Ascending aorta (tissue), 2 donors: ENCODE measurements at regions of chr18 and their contacts with region 1.

Region 1: DNA sequence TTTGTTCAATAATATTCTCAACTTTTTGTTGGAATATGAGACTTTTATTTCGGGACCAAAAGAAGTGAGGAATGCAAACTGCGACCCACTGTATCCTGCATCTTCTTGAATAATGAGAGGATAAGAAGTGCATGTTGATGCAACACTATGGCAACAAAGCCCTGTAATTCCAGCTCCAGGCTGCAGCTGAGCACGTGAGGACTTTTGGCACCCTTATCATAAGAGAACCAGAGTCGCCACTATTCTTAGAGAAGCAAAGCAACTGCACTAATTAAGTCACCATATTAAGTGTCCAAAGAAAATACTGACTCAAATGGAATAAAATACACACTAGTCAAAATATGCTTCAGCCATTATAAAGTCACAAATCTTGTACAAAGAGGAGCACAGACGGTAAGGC is 65.8 kb downstream of the FAM210A start:
- DNase-seq: no peak
- H3K4me3 ChIP-seq: no peak overlapping the region
- H3K27ac ChIP-seq: no peak overlapping the region
- H3K4me1 ChIP-seq: peaks cover 0 to 17% of the 10 kb centered on the region in 2 donors
- H3K27me3 ChIP-seq: no peaks in the 10 kb centered on the region
- CTCF ChIP-seq: no peak

Region 2: GRCh38 chr18:13645093-13645492 is 15.4 kb before region 1 on chr18:
- intact Hi-C with region 1: loop called (anchors 2 kb)
- DNase-seq: no peak
- H3K4me3 ChIP-seq: no peak overlapping the region
- H3K27ac ChIP-seq: no peak overlapping the region
- H3K4me1 ChIP-seq: peaks cover 0 to 8% of the 10 kb centered on the region in 2 donors
- H3K27me3 ChIP-seq: no peaks in the 10 kb centered on the region
- CTCF ChIP-seq: no peak